HEK293 (cell line): ENCODE measurements at regions of chr14 and their contacts with region 1.

Region 1: DNA sequence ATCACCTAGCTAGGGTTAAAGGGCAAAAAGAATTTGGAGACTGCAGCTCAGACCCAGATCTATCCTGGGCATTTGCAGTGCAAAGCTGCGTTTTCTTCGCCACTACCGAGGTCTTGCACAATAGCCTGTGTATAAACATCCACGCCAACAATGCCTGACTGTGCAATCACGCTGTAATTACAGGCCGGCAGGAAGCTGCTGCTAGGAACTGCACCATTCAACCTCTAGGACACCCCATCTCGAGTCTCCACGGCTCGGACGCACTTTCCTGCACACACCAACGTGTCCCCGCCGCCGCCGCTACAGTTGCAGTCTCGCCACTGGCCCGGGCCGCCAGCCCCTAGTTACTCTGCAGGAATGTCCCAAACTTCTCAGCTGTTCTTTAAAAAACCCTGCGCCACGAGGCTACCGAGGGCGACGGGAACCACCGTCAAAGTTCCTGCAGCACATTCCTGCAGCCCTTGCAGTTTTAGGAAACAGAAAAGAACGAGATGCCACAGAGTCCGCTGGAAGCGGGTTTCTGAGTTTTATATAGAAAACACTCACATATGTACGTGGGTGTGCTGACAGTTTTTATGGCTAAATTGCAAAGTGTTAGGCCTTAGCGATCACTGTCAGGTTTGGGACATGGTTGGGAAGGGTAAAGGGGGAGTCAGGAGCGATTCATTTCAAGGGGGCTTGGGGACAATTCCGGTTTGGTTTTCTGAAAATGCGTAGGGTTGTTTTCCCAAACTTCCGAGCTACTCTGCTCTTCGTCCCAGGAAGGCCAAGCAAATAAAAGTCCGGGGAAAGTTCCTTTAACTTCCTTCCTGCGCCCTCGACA is 65.5 kb upstream of the PTGR2 start:
- H3K4me3 ChIP-seq: peak overlapping the region; percentile 71
- H3K27ac ChIP-seq: peak overlapping the region; percentile 97
- H3K4me1 ChIP-seq: peaks cover 18% of the 10 kb centered on the region
- CTCF ChIP-seq: no peak; the same call in 1 of the 2 replicates

Region 2: GRCh38 chr14:73369428-73369827 is 416.7 kb before region 1 on chr14:
- CTCF ChIA-PET with region 1: no interaction called
- POLR2A ChIA-PET with region 1: no interaction called
- H3K4me3 ChIP-seq: no peak overlapping the region
- H3K27ac ChIP-seq: no peak overlapping the region
- H3K4me1 ChIP-seq: no peaks in the 10 kb centered on the region
- CTCF ChIP-seq: no peak

Region 3: GRCh38 chr14:73771848-73772638 is 14.0 kb before region 1 on chr14:
- CTCF ChIA-PET with region 1: interaction called, 8 read pairs
- POLR2A ChIA-PET with region 1: interaction called, 14 read pairs
- H3K4me3 ChIP-seq: no peak overlapping the region
- H3K27ac ChIP-seq: peak overlapping the region; percentile 47
- H3K4me1 ChIP-seq: peaks cover 13% of the 10 kb centered on the region
- CTCF ChIP-seq: no peak

Region 4: GRCh38 chr14:73935666-73936065 is 149.6 kb after region 1 on chr14:
- CTCF ChIA-PET with region 1: no interaction called
- POLR2A ChIA-PET with region 1: no interaction called
- H3K4me3 ChIP-seq: no peak overlapping the region
- H3K27ac ChIP-seq: no peak overlapping the region
- H3K4me1 ChIP-seq: no peaks in the 10 kb centered on the region
- CTCF ChIP-seq: no peak